Upper lobe of right lung (tissue), 1 donor: ENCODE measurements at regions of chr9 and their contacts with region 1.

Region 1: GRCh38 chr9:71604197-71605063 is 163.9 kb downstream of the CEMIP2 start:
- DNase-seq: peak; percentile 78
- ATAC-seq: peak; percentile 96
- H3K4me3 ChIP-seq: no peak overlapping the region
- H3K27ac ChIP-seq: no peak overlapping the region
- H3K4me1 ChIP-seq: no peaks in the 10 kb centered on the region
- H3K27me3 ChIP-seq: no peaks in the 10 kb centered on the region
- CTCF ChIP-seq: peak; percentile 84

Region 2: DNA sequence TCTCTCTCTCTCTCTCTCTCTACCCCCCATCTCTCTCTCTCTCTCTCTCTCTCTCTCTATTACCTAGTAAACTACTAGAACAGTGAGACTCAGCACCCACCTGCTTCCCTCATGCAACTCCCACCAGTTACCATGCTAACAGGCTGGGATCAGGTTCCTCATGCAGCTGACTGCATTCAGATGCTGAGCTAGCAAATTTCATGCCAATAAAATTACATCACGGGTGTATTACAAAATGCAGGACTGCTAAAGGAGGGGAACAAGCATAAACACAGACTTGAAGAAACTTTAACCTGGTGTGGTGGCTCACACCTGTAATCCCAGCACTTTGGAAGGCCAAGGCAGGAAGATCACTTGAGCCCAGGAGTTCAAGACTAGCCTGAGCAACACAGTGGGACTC is 87.9 kb after region 1 on chr9:
- intact Hi-C with region 1: loop called (anchors 10 kb)
- DNase-seq: no peak
- ATAC-seq: peak; percentile 70
- H3K4me3 ChIP-seq: no peak overlapping the region
- H3K27ac ChIP-seq: no peak overlapping the region
- H3K4me1 ChIP-seq: no peaks in the 10 kb centered on the region
- H3K27me3 ChIP-seq: no peaks in the 10 kb centered on the region
- CTCF ChIP-seq: no peak